ENCODE measurements at regions of chr22 and their contacts with region 1.

Region 1: GRCh38 chr22:39502109-39502788 is at the start of gene MIEF1:
- DNase-seq: peak; percentile 98
- ATAC-seq: peak; percentile 99
- H3K4me3 Mint-ChIP-seq: peak within 1 kb of the TSS; percentile 80
- H3K27ac Mint-ChIP-seq: peak within 1 kb of the TSS; percentile 93
- H3K4me1 Mint-ChIP-seq: peaks cover 32% of the 10 kb centered on the region
- H3K27me3 Mint-ChIP-seq: no peaks in the 10 kb centered on the region
- CTCF ChIP-seq: no peak
- total RNA-seq, gene MIEF1: 48.2 to 51.1 TPM

Region 2: DNA sequence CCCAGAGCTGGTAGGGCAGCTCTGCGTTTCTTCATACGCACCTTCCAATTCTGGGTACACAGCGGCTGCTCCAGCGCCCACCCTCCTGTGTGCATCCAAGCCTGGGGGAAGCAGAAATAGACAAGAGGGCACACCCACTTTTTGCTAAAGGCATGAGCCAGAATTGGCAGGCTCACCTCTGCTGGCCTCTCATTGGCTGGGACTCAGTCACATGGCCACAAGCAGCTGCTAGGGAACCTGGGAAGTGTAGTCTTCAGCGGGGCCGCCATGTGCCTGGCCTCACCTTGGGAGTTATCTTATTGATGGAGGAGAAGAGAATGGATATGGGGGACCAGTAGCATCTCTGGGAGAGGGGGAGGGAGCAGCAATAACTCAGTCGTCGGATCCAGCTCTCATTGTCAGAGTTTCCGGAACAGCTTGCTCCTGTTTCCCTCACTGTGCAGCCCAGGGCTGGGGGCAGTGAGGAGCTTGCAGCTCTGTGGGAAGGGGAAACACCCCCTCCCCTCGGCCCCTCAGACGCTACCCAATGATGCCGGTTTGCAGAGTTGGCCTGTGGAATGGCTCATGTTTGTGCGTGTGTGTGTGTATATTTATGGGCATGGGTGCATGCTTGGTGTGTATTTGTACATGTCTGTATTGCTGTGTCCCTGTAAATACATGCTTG is 12.0 kb before region 1 on chr22:
- CTCF ChIA-PET with region 1: interaction called, 15 read pairs
- POLR2A ChIA-PET with region 1: interaction called, 7 read pairs
- intact Hi-C with region 1: no loop called
- DNase-seq: peak; percentile 92
- ATAC-seq: peak; percentile 99
- H3K4me3 Mint-ChIP-seq: peak overlapping the region; percentile 4
- H3K27ac Mint-ChIP-seq: no peak overlapping the region
- H3K4me1 Mint-ChIP-seq: peaks cover 12% of the 10 kb centered on the region
- H3K27me3 Mint-ChIP-seq: no peaks in the 10 kb centered on the region
- CTCF ChIP-seq: no peak

Region 3: DNA sequence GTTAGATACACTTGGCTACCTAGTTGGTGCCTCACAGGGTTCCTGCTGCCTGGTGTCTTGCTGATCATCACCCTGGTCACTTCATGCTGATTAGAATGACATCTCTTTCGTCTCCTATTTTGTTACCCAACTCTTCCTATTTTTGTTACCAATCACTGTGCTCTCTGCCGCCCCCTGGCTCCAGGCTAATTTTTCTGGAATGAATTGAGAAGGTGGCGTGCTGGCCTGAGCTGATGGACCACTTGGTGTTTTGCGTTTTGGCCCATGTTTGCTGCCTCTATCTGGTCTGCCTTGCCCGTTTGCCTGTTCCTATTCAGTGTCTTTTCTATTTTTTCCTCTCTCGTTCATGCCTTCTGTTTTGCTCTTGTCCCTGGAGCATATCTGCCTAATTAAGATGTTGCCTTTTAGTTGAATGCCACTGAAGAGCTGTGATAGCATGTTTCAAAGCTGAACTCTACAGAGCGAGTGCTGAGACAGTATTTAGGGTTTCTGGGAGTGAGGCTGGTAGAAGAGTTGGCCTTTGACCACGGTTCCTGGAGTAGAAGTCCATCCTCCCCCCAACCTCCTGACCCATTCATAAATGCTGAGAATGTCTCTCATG is 12.2 kb after region 1 on chr22:
- CTCF ChIA-PET with region 1: interaction called, 69 read pairs
- POLR2A ChIA-PET with region 1: interaction called, 234 read pairs
- intact Hi-C with region 1: no loop called
- DNase-seq: peak; percentile 75
- ATAC-seq: no peak
- H3K4me3 Mint-ChIP-seq: no peak overlapping the region
- H3K27ac Mint-ChIP-seq: peak overlapping the region; percentile 19
- H3K4me1 Mint-ChIP-seq: peaks cover 39% of the 10 kb centered on the region
- H3K27me3 Mint-ChIP-seq: no peaks in the 10 kb centered on the region
- CTCF ChIP-seq: peak; percentile 72

Measured in activated CD8-positive, alpha-beta T cell treated with anti-CD3 and anti-CD28 coated beads for 36 hours (primary cell).